ENCODE measurements at regions of chr3 and their contacts with region 1.

Region 1: DNA sequence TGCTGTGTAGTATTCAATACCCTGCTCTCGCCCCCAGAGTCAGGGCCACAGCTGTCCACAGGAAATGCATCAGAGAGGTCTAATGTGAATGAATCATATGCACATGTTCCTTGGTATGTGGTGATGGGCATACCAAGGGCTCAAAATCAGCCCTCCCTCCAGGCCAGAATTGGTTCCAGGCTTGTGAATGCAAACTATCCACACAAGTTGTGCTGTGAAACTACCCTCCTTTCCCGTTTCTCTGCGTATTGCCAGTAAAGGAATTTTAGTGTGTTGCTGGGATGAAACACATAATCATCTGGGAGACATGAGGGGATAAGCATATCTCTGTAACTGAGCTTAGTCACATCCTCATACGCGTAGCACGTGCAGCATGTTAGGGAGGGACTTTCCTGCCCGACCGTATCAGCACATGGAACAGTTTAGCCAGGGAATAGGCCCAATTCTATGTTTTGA is 9.2 kb upstream of the MME start:
- DNase-seq: no peak
- ATAC-seq: no peak
- H3K4me3 ChIP-seq: no peak overlapping the region
- H3K4me3 Mint-ChIP-seq: no peak overlapping the region
- H3K27ac ChIP-seq: no peak overlapping the region
- H3K27ac Mint-ChIP-seq: no peak overlapping the region
- H3K4me1 ChIP-seq: no peaks in the 10 kb centered on the region
- H3K4me1 Mint-ChIP-seq: no peaks in the 10 kb centered on the region
- H3K27me3 ChIP-seq: no peaks in the 10 kb centered on the region
- H3K27me3 Mint-ChIP-seq: no peaks in the 10 kb centered on the region

Region 2: DNA sequence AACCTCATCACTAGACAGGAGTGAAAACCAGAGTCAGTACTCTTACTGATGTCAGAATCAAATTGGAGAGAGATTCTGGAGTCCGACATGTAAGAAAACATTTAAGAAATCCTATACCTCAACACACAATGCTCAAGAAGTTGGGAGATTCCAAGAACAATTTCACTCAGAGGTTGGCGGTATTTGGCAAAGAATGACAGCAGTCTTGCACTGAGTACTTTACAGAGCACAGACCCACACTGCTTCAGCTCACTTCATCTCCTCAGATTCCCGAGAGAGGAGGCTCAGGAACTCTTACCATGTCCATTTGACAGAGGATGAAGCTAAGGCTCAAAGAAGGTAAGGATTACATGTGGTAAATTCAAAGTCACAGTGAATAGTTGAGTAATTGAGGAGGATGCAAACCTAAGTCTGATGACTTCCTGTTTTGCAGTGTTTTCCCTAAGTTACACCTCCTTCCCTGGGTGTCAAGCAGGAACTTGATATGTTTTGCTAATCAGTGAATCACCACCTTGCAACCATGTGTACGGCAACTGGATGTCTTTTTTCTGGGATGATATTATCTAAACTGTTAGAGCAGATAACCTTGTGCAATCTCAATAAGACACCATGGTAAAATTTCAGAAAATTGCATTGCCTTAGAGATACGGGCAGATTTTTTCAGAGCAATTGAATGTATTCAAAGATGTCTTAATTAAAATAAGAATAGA is 52.2 kb before region 1 on chr3:
- CTCF ChIA-PET with region 1: interaction called in 1 of 2 experiments, 3 read pairs
- POLR2A ChIA-PET with region 1: interaction called in 1 of 2 experiments, 14 read pairs
- DNase-seq: no peak
- ATAC-seq: no peak
- H3K4me3 ChIP-seq: no peak overlapping the region
- H3K4me3 Mint-ChIP-seq: no peak overlapping the region
- H3K27ac ChIP-seq: no peak overlapping the region
- H3K27ac Mint-ChIP-seq: no peak overlapping the region
- H3K4me1 ChIP-seq: no peaks in the 10 kb centered on the region
- H3K4me1 Mint-ChIP-seq: no peaks in the 10 kb centered on the region
- H3K27me3 ChIP-seq: no peaks in the 10 kb centered on the region
- H3K27me3 Mint-ChIP-seq: no peaks in the 10 kb centered on the region

Region 3: DNA sequence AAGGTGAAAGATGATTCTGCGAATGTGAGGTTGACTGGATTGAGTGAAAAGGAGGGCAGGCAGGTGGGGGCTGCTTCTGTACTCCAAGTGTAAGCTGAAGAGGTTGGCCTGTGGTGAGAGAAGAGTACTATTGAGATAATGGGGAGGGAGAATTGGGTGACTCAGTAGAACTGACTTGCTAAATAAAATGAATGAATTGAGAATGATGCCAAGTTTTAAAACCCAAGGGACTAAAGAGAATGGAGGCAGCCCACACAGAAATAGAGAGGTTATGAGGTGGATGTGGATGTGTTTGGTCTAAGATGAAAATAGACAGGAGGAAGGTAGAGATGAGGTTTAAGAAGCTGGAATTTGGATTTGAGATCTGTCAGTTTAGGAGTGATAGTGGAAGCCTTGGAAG is 15.1 kb after region 1 on chr3:
- CTCF ChIA-PET with region 1: no interaction called
- POLR2A ChIA-PET with region 1: no interaction called
- DNase-seq: no peak
- ATAC-seq: no peak
- H3K4me3 ChIP-seq: no peak overlapping the region
- H3K4me3 Mint-ChIP-seq: no peak overlapping the region
- H3K27ac ChIP-seq: no peak overlapping the region
- H3K27ac Mint-ChIP-seq: no peak overlapping the region
- H3K4me1 ChIP-seq: no peaks in the 10 kb centered on the region
- H3K4me1 Mint-ChIP-seq: peaks cover under 1 to 6% (median under 1%) of the 10 kb centered on the region in 3 donors
- H3K27me3 ChIP-seq: no peaks in the 10 kb centered on the region
- H3K27me3 Mint-ChIP-seq: peaks cover 12 to 19% of the 10 kb centered on the region in 2 donors

Region 4: GRCh38 chr3:155323063-155323666 is 252.2 kb after region 1 on chr3:
- CTCF ChIA-PET with region 1: no interaction called
- POLR2A ChIA-PET with region 1: no interaction called
- DNase-seq: peak in 2 of 35 experiments; percentile 3 to 37
- ATAC-seq: no peak
- H3K4me3 ChIP-seq: no peak overlapping the region
- H3K4me3 Mint-ChIP-seq: no peak overlapping the region
- H3K27ac ChIP-seq: no peak overlapping the region
- H3K27ac Mint-ChIP-seq: no peak overlapping the region
- H3K4me1 ChIP-seq: no peaks in the 10 kb centered on the region
- H3K4me1 Mint-ChIP-seq: no peaks in the 10 kb centered on the region
- H3K27me3 ChIP-seq: no peaks in the 10 kb centered on the region
- H3K27me3 Mint-ChIP-seq: no peaks in the 10 kb centered on the region

Region 5: DNA sequence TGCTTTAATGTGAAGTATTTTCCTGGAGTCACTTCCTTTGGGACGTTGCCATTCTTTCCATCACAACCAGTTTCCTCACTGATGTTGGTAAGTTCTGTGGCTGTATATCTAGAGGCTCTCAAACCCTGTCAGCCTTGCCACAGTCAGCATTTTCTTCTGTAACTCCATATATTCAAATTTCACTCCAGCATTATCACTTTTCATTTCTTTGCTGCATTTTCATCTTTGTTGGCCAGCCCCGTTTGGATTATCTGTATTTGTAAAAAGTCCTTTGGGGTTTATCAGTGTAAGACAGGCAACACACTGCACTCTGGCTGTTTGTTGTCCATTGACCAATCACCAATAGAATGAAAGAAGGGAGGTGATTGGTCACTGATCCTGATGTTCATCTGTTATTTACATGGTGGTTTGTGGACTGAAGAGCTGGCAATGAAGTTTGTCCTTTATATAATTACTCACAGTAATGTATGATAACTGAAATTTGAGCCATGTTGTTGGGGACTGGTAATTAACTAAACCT is 819.8 kb after region 1 on chr3:
- CTCF ChIA-PET with region 1: no interaction called
- POLR2A ChIA-PET with region 1: interaction called in 1 of 2 experiments, 12 read pairs
- DNase-seq: no peak
- ATAC-seq: no peak
- H3K4me3 ChIP-seq: no peak overlapping the region
- H3K4me3 Mint-ChIP-seq: no peak overlapping the region
- H3K27ac ChIP-seq: no peak overlapping the region
- H3K27ac Mint-ChIP-seq: peak overlapping the region in 1 of 2 donors; percentile 48
- H3K4me1 ChIP-seq: peaks cover 0 to 8% of the 10 kb centered on the region in 2 experiments
- H3K4me1 Mint-ChIP-seq: peaks cover 20 to 38% (median 35%) of the 10 kb centered on the region in 3 donors
- H3K27me3 ChIP-seq: no peaks in the 10 kb centered on the region
- H3K27me3 Mint-ChIP-seq: no peaks in the 10 kb centered on the region

Measured in T-cell (primary cell).